ENCODE measurements at regions of chr6 and their contacts with region 1.

Region 1: DNA sequence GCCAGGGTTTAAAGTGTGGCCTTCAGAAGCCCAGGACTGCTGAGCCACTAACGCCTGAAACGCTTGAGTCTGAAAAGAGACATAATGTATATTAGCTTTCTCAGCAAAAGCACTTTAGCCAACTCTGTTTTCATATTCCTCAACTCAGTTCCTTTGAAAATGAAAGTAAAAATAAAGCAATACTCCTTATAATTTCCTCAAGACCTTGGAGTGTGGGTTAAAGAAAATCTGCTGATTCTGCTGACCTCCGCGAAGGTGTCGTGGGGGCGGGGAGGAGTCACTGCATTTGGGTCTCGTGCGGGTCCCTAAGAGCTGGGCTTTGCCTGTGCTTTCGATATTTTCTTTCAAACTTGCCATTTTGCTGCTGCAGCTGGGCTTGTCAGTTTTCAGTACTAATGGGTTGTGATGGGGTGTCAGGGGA is 142.2 kb upstream of the ARID1B start:
- DNase-seq: peak; percentile 25
- H3K4me3 ChIP-seq: no peak overlapping the region
- H3K27ac ChIP-seq: peak overlapping the region; percentile 90
- H3K4me1 ChIP-seq: peaks cover 51% of the 10 kb centered on the region
- CTCF ChIP-seq: no peak

Region 2: DNA sequence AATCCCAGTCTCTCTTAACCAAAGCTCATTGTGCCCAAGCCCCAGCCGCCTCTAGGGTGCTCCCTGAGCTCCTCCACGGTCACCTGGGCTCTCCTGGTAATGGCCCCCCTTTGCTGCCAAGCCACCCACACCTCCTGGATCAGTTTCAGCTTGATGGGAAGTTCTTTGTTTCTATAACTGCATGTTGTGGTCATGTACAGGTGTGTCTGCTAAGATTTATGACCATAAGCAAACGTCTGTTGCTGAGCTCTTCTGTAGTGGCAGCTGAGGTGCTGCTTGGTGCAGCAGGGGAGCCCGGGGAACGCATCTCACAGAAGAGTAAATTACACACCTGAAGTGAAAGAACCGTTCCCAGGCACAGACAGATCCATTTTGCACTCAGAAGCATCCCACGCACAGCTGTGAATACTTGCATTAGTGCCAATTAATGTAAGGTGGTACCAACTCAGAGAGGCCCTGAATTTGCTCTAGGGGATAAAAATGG is 52.4 kb before region 1 on chr6:
- CTCF ChIA-PET with region 1: interaction called, 6 read pairs
- POLR2A ChIA-PET with region 1: interaction called, 11 read pairs
- intact Hi-C with region 1: loop called (anchors 2 kb)
- DNase-seq: peak; percentile 89
- H3K4me3 ChIP-seq: peak overlapping the region; percentile 33
- H3K27ac ChIP-seq: peak overlapping the region; percentile 84
- H3K4me1 ChIP-seq: peaks cover 23% of the 10 kb centered on the region
- CTCF ChIP-seq: peak; percentile 59

Region 3: DNA sequence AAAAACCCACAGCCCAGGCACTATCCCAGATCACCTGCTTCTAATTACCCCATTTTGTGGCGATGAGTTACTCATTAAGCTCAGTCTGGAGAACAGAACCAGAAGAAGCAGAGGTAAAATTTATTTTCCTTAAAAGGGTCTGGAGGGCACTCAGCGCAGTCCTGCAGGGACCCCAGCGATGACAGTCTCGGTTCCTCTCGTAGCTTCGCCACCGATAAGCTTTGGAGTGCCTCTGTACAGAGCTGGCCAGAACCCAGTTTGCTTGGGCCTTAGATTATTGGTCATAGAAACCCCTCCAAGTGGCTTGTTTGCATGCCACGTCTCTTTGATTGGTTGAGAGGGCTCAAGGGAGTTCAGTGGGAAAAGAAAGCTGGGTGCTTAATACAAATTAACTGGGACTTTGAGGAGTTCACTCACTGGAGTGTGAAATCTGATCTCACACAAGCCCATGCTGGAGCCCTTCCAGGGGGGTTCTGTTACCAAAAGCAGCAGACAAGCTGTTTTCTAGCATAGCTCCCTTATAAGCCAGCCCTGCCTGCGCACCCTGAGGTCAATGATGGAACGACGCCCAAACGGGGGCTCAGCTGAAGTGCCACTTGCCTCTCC is 16.3 kb before region 1 on chr6:
- CTCF ChIA-PET with region 1: no interaction called
- POLR2A ChIA-PET with region 1: interaction called, 14 read pairs
- intact Hi-C with region 1: no loop called
- DNase-seq: no peak
- H3K4me3 ChIP-seq: no peak overlapping the region
- H3K27ac ChIP-seq: no peak overlapping the region
- H3K4me1 ChIP-seq: no peaks in the 10 kb centered on the region
- CTCF ChIP-seq: no peak

Measured in OCI-LY7 (cell line).